GM18951 (cell line): ENCODE measurements at regions of chr4 and their contacts with region 1.

Region 1: DNA sequence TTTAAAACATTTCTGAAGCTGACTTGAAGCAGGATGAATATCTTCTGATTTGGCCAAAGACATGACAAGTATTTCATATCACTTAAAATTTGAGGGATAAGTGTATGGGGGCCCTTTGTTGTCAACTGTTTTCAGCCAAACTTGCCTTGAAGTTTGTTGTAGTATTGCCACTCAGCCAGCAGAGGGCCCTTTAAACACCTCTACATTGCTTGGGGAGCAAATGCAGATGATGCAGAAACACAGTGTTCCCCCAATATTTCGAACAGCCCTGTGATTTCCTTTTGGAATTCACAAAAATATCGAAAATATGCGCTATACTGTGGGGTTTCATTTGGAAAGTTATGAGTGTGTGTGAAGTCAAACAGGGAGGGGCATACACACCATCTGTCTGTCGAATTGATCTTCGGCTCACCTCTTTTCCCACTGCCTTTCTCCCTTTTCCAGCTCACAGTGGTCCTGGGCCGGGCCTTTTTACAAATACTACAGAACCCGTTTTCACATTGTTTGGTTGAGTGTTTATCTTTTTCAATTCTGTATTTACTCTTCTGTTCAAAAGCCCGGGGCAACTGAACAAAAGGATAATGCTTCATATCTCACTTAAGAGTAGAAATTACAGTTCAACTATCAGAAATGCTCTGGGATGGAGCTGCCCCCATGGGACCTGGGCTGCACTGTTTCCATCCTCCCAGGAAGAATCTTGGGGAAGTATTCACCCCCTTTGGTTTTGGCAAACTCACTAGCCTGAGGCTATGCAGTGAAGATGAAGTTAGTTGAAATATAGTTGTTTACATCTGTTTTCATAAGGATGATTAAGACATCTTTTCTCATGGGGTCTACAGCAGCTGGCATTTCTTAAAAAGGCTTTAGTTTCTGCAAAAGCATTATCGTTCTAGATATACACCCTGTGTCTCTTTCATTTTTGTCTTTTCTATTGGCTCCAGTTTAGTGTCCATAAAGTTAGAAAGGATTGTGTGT is 137.6 kb downstream of the EGF start:
- POLR2A ChIP-seq: no peak

Region 2: GRCh38 chr4:109873791-109874514 is 176.3 kb before region 1 on chr4:
- in situ Hi-C with region 1: no loop called
- POLR2A ChIP-seq: no peak

Region 3: GRCh38 chr4:110201502-110201901 is 151.3 kb after region 1 on chr4:
- in situ Hi-C with region 1: loop called (anchors 10 kb)
- POLR2A ChIP-seq: no peak